ENCODE measurements at regions of chr6 and their contacts with region 1.

Region 1: GRCh38 chr6:43263314-43264178 is 20.3 kb downstream of the TTBK1 start:
- DNase-seq: peak; percentile 74 to 88 (median 80)
- ATAC-seq: peak; percentile 67 to 84 (median 80)
- H3K4me3 ChIP-seq: no peak overlapping the region
- H3K27ac ChIP-seq: no peak overlapping the region
- H3K4me1 ChIP-seq: peaks cover 0 to 25% (median 10%) of the 10 kb centered on the region in 12 donors
- H3K27me3 ChIP-seq: peaks cover 0 to 6% (median 0%) of the 10 kb centered on the region in 9 donors
- CTCF ChIP-seq: peak; percentile 58 to 77 (median 68)
- POLR2A ChIP-seq: no peak

Region 2: GRCh38 chr6:43334466-43335095 is 71.0 kb after region 1 on chr6:
- intact Hi-C with region 1: loop called in 9 of 10 experiments (anchors 2 to 5 kb)
- DNase-seq: no peak
- ATAC-seq: peak in 2 of 4 donors; percentile 53
- H3K4me3 ChIP-seq: no peak overlapping the region
- H3K27ac ChIP-seq: no peak overlapping the region
- H3K4me1 ChIP-seq: peaks cover 0 to 25% (median 6%) of the 10 kb centered on the region in 12 donors
- H3K27me3 ChIP-seq: no peaks in the 10 kb centered on the region
- CTCF ChIP-seq: peak; percentile 33 to 64 (median 48)
- POLR2A ChIP-seq: no peak

Region 3: DNA sequence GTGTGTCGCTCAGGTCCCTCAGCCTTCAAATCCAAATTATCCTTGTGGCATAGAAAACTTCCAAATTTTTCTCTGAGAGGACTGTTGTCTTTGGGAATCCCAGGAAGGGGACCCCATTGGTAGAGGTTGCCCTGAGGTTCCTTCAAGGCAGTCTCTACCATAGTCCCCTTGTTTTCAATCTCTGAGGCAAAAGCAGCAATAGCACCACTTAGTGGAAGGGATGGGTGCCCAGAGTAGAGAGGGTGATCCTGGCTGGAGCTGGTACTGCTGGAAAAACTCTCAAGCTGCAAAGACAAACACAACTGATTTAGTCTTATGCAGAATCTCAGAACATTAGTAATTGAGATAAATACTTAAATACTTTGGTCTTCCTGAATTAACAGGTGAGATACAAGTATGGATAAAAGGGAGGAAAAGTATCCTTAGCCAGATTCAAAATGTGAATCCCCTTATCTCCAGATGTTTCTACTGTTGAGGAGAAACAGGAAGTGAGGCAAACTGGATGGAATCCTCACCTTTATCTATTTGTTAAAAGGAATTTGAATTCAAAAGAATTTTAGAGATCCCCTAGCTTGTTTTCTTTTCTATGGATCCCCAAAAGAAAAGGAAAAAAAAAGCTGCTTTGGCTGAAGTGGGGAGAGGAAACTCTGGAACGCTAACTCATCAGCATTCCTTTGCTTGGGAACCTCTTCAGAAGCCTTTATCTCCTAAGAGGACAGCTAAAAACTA is 92.5 kb after region 1 on chr6:
- intact Hi-C with region 1: loop called (anchors 1 to 5 kb)
- DNase-seq: no peak
- ATAC-seq: peak; percentile 71 to 91 (median 90)
- H3K4me3 ChIP-seq: no peak overlapping the region
- H3K27ac ChIP-seq: no peak overlapping the region
- H3K4me1 ChIP-seq: no peaks in the 10 kb centered on the region
- H3K27me3 ChIP-seq: no peaks in the 10 kb centered on the region
- CTCF ChIP-seq: peak in 11 of 12 donors; percentile 9 to 61 (median 44)
- POLR2A ChIP-seq: no peak